ENCODE measurements at regions of chr5 and their contacts with region 1.

Region 1: DNA sequence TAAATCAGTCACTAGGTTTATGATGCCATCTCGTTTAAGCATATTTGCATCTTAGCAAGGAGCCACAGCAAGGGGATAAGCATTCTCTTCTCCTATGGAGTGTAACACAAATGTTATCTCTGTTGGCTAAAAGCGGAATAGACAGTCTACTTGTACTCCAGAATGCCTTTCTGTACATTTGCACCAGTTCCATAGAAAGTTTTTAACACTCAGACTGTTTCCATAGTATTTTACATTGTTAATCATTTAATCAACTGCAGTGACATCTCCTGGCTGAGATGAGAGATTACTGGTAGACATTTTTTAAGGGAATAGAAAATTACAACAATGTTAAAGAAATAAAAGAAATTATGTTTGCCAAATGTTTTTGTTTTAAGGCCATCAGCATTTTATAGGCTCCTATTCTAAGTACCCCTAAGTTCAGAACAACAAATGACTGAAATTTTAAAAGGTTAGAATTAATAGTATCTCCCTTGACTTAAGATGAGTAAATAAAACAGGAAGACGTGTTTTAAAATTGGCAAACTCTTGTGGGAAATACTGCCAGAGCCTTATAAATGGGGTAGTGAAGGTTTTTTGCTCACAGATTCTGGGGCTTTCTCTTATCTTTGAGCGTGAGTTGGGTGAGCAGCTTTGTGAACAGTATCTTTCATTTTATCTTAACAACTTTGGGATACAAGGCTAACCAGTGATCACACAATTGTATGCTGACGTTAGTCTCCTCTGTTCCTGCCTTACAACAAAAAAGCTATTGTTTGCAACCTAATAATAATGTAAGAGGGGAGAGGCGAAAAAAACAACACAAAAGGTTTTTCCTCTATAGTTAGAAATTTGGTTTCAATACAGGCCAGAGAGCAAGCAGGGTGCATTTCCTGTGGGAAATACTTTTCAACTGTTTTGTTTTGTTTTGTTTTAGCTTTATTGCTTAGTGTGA is 294.3 kb downstream of the FBXL7 start:
- DNase-seq: no peak
- H3K4me3 Mint-ChIP-seq: no peak overlapping the region
- H3K27ac Mint-ChIP-seq: no peak overlapping the region
- H3K4me1 Mint-ChIP-seq: no peaks in the 10 kb centered on the region
- H3K27me3 Mint-ChIP-seq: no peaks in the 10 kb centered on the region

Region 2: GRCh38 chr5:15105796-15106393 is 688.4 kb before region 1 on chr5:
- CTCF ChIA-PET with region 1: no interaction called
- intact Hi-C with region 1: loop called (anchors 10 kb)
- DNase-seq: peak; percentile 56
- H3K4me3 Mint-ChIP-seq: no peak overlapping the region
- H3K27ac Mint-ChIP-seq: no peak overlapping the region
- H3K4me1 Mint-ChIP-seq: peaks cover 4% of the 10 kb centered on the region
- H3K27me3 Mint-ChIP-seq: no peaks in the 10 kb centered on the region

Region 3: GRCh38 chr5:15823398-15823797 is 29.1 kb after region 1 on chr5:
- CTCF ChIA-PET with region 1: no interaction called
- intact Hi-C with region 1: no loop called
- DNase-seq: no peak
- H3K4me3 Mint-ChIP-seq: no peak overlapping the region
- H3K27ac Mint-ChIP-seq: no peak overlapping the region
- H3K4me1 Mint-ChIP-seq: no peaks in the 10 kb centered on the region
- H3K27me3 Mint-ChIP-seq: no peaks in the 10 kb centered on the region

Region 4: DNA sequence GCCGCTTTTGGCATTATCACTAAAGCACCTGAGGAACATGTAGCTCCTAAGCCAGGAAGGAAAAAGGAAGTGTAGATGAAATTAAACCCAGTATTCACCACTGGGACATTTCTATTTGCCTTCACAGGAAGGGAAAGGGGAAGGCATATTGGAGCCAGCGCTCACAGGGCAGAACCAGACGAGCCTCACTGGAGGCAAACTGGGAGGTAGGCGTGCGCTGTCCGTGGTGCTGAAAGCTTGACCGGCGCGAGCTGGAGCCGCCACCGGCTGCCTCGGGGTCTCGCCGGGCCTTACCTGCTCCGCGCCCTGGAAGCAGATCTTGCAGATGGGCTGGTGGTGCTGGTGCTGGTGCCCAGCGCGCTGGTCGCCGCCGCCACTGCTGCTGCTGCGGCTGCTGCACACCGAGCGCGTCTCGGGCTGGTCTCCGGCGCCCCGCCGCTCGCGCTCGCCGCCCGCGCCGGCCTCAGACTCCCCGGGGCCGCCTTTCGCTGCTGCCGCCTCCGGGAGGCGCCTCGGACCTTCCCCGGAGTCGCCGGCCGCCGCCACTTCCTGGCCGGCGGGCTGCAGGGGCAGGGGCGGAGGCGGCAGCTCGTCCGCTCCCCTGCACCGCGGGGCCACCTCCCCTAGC is 384.5 kb after region 1 on chr5:
- CTCF ChIA-PET with region 1: no interaction called
- intact Hi-C with region 1: no loop called
- DNase-seq: peak; percentile 55
- H3K4me3 Mint-ChIP-seq: peak overlapping the region; percentile 6
- H3K27ac Mint-ChIP-seq: no peak overlapping the region
- H3K4me1 Mint-ChIP-seq: peaks cover 7% of the 10 kb centered on the region
- H3K27me3 Mint-ChIP-seq: peaks cover 41% of the 10 kb centered on the region